ENCODE measurements at regions of chr15 and their contacts with region 1.

Region 1: DNA sequence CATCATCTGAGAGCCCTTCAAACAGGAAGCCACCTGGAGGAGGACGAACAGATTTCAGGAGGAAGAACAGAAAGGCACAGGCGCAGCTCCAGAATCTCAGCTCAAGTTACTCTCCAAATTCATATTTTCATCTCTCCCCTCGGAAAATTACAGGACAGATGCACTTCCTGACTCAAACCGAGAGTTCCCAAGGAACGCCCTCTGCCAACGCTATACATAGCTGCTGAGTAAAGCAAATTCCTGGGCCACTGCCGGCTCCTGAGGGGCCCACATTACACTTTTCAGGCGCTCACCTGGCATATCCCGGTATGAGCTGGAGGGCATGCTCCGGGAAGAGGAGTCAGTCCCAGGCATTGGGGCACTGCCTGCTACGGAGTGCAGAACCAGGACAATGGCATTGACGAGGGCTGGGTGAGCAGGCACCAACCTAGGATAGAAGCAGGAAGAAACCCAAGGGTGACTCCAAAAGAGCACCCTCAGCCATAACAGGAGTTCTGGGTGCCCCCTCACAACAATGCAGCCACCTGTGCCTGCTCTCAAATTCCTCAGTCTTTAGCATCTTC is 11.2 kb downstream of the UBL7 start:
- DNase-seq: no peak
- H3K4me3 ChIP-seq: no peak overlapping the region
- H3K4me3 Mint-ChIP-seq: no peak overlapping the region
- H3K27ac ChIP-seq: no peak overlapping the region
- H3K27ac Mint-ChIP-seq: no peak overlapping the region
- H3K4me1 ChIP-seq: no peaks in the 10 kb centered on the region
- H3K4me1 Mint-ChIP-seq: peaks cover 8 to 17% (median 11%) of the 10 kb centered on the region in 4 donors
- H3K27me3 ChIP-seq: no peaks in the 10 kb centered on the region
- H3K27me3 Mint-ChIP-seq: no peaks in the 10 kb centered on the region

Region 2: GRCh38 chr15:73732930-73733329 is 716.8 kb before region 1 on chr15:
- CTCF ChIA-PET with region 1: no interaction called
- POLR2A ChIA-PET with region 1: no interaction called
- intact Hi-C with region 1: no loop called
- DNase-seq: no peak
- H3K4me3 ChIP-seq: no peak overlapping the region
- H3K4me3 Mint-ChIP-seq: no peak overlapping the region
- H3K27ac ChIP-seq: no peak overlapping the region
- H3K27ac Mint-ChIP-seq: no peak overlapping the region
- H3K4me1 ChIP-seq: no peaks in the 10 kb centered on the region
- H3K4me1 Mint-ChIP-seq: no peaks in the 10 kb centered on the region
- H3K27me3 ChIP-seq: peaks cover under 1% of the 10 kb centered on the region
- H3K27me3 Mint-ChIP-seq: peaks cover 4 to 10% of the 10 kb centered on the region in 2 donors

Region 3: DNA sequence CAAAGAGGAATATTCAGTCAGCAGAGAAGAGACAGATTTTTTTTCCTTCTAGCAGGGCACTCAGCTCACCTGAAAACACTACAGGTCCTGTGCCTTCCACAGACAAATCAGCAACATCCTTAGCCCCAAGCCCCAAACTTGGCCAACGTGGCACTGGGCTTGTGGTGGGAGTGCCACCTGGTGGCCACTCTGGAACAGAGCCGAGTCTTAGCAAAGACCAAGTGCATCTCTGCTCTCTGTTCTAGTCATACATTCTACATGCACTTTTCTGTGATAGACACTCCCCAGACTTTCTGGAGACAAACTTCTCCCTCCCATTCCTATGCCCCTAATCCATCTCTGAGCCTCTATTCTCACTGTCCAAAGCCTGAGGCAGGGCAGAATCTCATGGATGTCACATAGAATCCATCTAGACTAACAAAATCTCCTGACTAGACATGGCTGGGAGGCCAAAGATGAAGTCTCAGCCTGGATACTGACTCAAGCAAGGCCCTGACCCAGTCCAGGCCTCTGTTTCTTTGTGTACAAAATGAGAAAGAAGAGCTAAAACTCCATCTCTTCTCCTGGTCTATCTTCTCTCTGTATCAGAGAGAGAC is 10.9 kb before region 1 on chr15:
- CTCF ChIA-PET with region 1: interaction called, 21 read pairs
- POLR2A ChIA-PET with region 1: no interaction called
- intact Hi-C with region 1: no loop called
- DNase-seq: peak; percentile 61 to 71 (median 66)
- H3K4me3 ChIP-seq: no peak overlapping the region
- H3K4me3 Mint-ChIP-seq: peak overlapping the region in 1 of 8 donors; percentile 44
- H3K27ac ChIP-seq: no peak overlapping the region
- H3K27ac Mint-ChIP-seq: peak overlapping the region in 1 of 7 donors; percentile 9
- H3K4me1 ChIP-seq: peaks cover 11% of the 10 kb centered on the region
- H3K4me1 Mint-ChIP-seq: peaks cover 4 to 17% (median 11%) of the 10 kb centered on the region in 4 donors
- H3K27me3 ChIP-seq: no peaks in the 10 kb centered on the region
- H3K27me3 Mint-ChIP-seq: no peaks in the 10 kb centered on the region

Region 4: GRCh38 chr15:75029378-75030022 is 579.8 kb after region 1 on chr15:
- CTCF ChIA-PET with region 1: no interaction called
- POLR2A ChIA-PET with region 1: no interaction called
- intact Hi-C with region 1: no loop called
- DNase-seq: peak; percentile 75 to 84 (median 79)
- H3K4me3 ChIP-seq: no peak overlapping the region
- H3K4me3 Mint-ChIP-seq: peak overlapping the region in 1 of 8 donors; percentile 49
- H3K27ac ChIP-seq: no peak overlapping the region
- H3K27ac Mint-ChIP-seq: peak overlapping the region in 3 of 7 donors; percentile 37 to 71 (median 64)
- H3K4me1 ChIP-seq: peaks cover 16% of the 10 kb centered on the region
- H3K4me1 Mint-ChIP-seq: peaks cover 9 to 19% (median 13%) of the 10 kb centered on the region in 4 donors
- H3K27me3 ChIP-seq: no peaks in the 10 kb centered on the region
- H3K27me3 Mint-ChIP-seq: no peaks in the 10 kb centered on the region